BJ (cell line): ENCODE measurements at regions of chr22 and their contacts with region 1.

Region 1: GRCh38 chr22:26461188-26461810 is 22.3 kb downstream of the HPS4 start:
- DNase-seq: no peak
- H3K4me3 ChIP-seq: no peak overlapping the region
- H3K27me3 ChIP-seq: no peaks in the 10 kb centered on the region
- CTCF ChIP-seq: peak; percentile 87

Region 2: GRCh38 chr22:26364066-26365015 is 97.0 kb before region 1 on chr22:
- CTCF ChIA-PET with region 1: interaction called, 103 read pairs
- POLR2A ChIA-PET with region 1: no interaction called
- DNase-seq: peak; percentile 9
- H3K4me3 ChIP-seq: no peak overlapping the region
- H3K27me3 ChIP-seq: no peaks in the 10 kb centered on the region
- CTCF ChIP-seq: peak; percentile 79

Region 3: DNA sequence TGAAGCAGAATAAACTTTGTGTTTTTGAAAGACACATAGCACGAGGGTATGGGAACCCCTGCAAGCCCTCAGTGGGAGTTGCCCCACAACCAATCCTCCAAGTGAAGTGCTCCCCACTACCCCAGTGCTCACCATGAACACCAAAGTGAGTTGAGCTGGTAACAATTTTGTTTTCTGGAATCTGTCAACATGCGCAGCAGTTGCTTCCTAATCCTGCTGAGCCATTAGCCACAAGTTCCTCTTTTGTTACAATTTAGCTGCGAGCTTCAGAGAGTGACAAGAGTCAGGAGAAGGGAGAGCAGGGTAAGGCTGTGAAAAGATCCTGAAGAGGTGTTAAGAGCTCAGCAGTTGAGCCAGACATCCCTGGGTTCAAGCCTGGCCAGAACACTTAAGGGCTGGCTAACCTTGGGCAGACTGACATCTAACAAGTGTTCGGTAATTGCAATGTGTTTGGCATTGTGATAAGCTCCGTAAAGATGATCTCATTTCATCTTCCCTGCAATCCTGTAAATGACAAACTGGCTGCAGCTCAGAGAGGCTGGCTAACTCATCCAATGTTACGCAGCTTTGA is 56.4 kb before region 1 on chr22:
- CTCF ChIA-PET with region 1: interaction called, 101 read pairs
- POLR2A ChIA-PET with region 1: no interaction called
- DNase-seq: no peak
- H3K4me3 ChIP-seq: no peak overlapping the region
- H3K27me3 ChIP-seq: peaks cover 6% of the 10 kb centered on the region
- CTCF ChIP-seq: no peak

Region 4: DNA sequence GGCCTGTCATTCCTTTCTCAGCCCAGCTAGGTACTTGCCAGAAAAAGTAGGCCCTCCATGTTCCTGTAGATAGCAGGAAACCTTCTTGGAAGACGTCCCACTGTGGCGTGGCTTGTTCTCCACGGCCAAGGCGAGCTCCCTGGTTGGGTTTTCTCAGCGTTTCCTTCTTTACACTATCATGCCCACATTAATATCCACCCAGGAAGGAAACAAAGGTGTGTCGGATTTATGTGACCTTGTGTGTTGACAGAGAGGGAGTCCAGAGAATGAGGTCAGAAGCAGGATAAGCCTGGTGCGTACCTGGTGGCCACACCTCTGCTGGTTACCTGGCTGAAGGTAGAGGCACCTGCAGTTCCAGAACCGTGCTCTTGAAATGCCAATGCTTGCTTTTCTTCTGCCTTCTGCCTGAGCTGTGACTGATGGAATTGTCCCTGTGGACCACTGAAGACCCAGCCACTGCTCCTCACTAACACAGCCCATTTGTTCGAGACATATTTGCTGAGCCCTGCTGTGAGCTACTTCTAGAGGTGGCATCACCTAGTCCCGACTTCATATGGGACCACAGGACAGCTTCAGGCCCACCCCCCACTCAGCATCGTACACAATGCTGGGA is 24.3 kb before region 1 on chr22:
- CTCF ChIA-PET with region 1: interaction called, 23 read pairs
- POLR2A ChIA-PET with region 1: no interaction called
- DNase-seq: no peak
- H3K4me3 ChIP-seq: no peak overlapping the region
- H3K27me3 ChIP-seq: no peaks in the 10 kb centered on the region
- CTCF ChIP-seq: no peak

Region 5: GRCh38 chr22:26471522-26471921 is 10.2 kb after region 1 on chr22:
- CTCF ChIA-PET with region 1: interaction called, 15 read pairs
- POLR2A ChIA-PET with region 1: no interaction called
- DNase-seq: peak; percentile 75
- H3K4me3 ChIP-seq: no peak overlapping the region
- H3K27me3 ChIP-seq: no peaks in the 10 kb centered on the region
- CTCF ChIP-seq: no peak

Region 6: DNA sequence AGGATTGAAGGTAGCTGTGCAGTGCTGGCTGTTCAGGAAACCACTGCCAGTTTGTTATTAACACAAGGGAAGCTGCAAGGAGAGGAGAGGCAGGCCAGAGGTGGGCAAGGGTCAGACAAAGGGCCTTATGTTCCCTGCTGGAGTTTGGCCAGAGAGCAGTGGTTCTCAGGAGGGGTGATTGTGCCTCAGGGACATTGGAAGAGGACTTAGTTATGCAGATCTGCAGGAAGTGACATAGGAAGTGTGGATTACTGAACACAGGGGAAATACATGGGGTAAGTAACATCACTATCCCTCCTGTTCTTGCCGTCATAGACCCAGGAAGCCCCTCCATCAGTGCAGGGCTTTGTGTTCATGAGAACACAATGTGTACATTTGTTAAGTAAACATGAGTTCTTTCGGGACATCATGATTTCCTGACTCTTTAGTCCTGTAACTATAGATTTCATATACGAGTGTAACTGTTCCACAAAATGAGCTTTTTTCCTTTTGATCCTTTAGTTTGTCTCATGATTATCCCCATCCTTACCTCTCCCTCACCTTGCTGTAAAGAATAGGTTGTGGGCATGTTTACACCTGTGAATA is 28.2 kb after region 1 on chr22:
- CTCF ChIA-PET with region 1: no interaction called
- POLR2A ChIA-PET with region 1: no interaction called
- DNase-seq: no peak
- H3K4me3 ChIP-seq: no peak overlapping the region
- H3K27me3 ChIP-seq: no peaks in the 10 kb centered on the region
- CTCF ChIP-seq: no peak